Tibial artery (tissue), 4 donors: ENCODE measurements at regions of chr2 and their contacts with region 1.

Region 1: GRCh38 chr2:121076885-121077549 is 208.0 kb downstream of the TFCP2L1 start:
- DNase-seq: peak; percentile 42 to 74
- H3K4me3 ChIP-seq: no peak overlapping the region
- H3K27ac ChIP-seq: no peak overlapping the region
- H3K4me1 ChIP-seq: peaks cover 0 to 18% (median 8%) of the 10 kb centered on the region in 4 donors
- H3K27me3 ChIP-seq: peaks cover 0 to 62% of the 10 kb centered on the region in 2 donors
- CTCF ChIP-seq: peak; percentile 55 to 78

Region 2: GRCh38 chr2:120693121-120693520 is 383.9 kb before region 1 on chr2:
- intact Hi-C with region 1: loop called (anchors 2 kb)
- DNase-seq: no peak
- H3K4me3 ChIP-seq: no peak overlapping the region
- H3K27ac ChIP-seq: no peak overlapping the region
- H3K4me1 ChIP-seq: peaks cover 0 to 7% (median 0%) of the 10 kb centered on the region in 4 donors
- H3K27me3 ChIP-seq: peaks cover 0 to 26% of the 10 kb centered on the region in 2 donors
- CTCF ChIP-seq: no peak

Region 3: DNA sequence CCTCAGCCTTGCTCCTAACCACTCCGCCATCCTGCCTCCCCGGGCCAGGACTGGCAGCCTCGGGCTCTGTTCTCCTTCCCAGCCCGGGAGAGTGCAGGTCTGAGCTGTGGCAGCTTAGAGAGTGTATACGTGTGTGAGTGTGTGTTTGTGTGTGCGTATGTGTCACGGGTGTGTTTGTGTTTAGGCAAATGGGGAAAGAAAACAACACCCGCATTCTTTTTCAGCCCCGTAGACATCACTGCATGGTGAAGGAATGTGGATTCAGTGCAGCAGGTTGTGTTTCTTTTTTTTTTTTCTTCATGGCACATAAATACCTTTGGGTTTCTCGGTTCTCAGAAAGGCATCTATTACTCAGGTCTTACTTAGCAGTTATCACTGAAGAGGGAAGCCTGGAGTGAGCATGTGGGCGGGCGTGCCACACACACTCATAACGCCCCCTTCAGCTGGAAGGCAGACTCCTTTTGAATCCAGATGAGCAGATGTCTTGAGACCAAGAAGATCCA is 297.2 kb before region 1 on chr2:
- intact Hi-C with region 1: no loop called
- DNase-seq: no peak
- H3K4me3 ChIP-seq: no peak overlapping the region
- H3K27ac ChIP-seq: no peak overlapping the region
- H3K4me1 ChIP-seq: peaks cover 0 to 18% (median 11%) of the 10 kb centered on the region in 4 donors
- H3K27me3 ChIP-seq: no peaks in the 10 kb centered on the region
- CTCF ChIP-seq: no peak

Region 4: GRCh38 chr2:121254748-121255147 is 177.7 kb after region 1 on chr2:
- intact Hi-C with region 1: no loop called
- DNase-seq: no peak
- H3K4me3 ChIP-seq: no peak overlapping the region
- H3K27ac ChIP-seq: no peak overlapping the region
- H3K4me1 ChIP-seq: no peaks in the 10 kb centered on the region
- H3K27me3 ChIP-seq: peaks cover 0 to 5% of the 10 kb centered on the region in 2 donors
- CTCF ChIP-seq: no peak